ENCODE measurements at regions of chr11 and their contacts with region 1.

Region 1: GRCh38 chr11:14308114-14308896 is 50.7 kb downstream of the RRAS2 start:
- DNase-seq: peak in 2 of 9 experiments; percentile 53 to 67
- ATAC-seq: peak; percentile 84
- H3K4me3 ChIP-seq: no peak overlapping the region
- H3K4me3 Mint-ChIP-seq: no peak overlapping the region
- H3K27ac ChIP-seq: peak overlapping the region in 1 of 2 experiments; percentile 23
- H3K27ac Mint-ChIP-seq: no peak overlapping the region
- H3K4me1 ChIP-seq: peaks cover 6% of the 10 kb centered on the region
- H3K4me1 Mint-ChIP-seq: peaks cover 31% of the 10 kb centered on the region
- H3K27me3 ChIP-seq: no peaks in the 10 kb centered on the region
- H3K27me3 Mint-ChIP-seq: no peaks in the 10 kb centered on the region
- CTCF ChIP-seq: peak; percentile 59

Region 2: GRCh38 chr11:14327116-14327515 is 18.8 kb after region 1 on chr11:
- CTCF ChIA-PET with region 1: interaction called, 4 read pairs
- POLR2A ChIA-PET with region 1: interaction called, 5 read pairs
- intact Hi-C with region 1: loop called in 1 of 2 experiments (anchors 2 kb)
- DNase-seq: no peak
- ATAC-seq: no peak
- H3K4me3 ChIP-seq: no peak overlapping the region
- H3K4me3 Mint-ChIP-seq: no peak overlapping the region
- H3K27ac ChIP-seq: peak overlapping the region in 1 of 2 experiments; percentile 56
- H3K27ac Mint-ChIP-seq: no peak overlapping the region
- H3K4me1 ChIP-seq: peaks cover 12% of the 10 kb centered on the region
- H3K4me1 Mint-ChIP-seq: peaks cover 58% of the 10 kb centered on the region
- H3K27me3 ChIP-seq: no peaks in the 10 kb centered on the region
- H3K27me3 Mint-ChIP-seq: no peaks in the 10 kb centered on the region
- CTCF ChIP-seq: no peak

Region 3: DNA sequence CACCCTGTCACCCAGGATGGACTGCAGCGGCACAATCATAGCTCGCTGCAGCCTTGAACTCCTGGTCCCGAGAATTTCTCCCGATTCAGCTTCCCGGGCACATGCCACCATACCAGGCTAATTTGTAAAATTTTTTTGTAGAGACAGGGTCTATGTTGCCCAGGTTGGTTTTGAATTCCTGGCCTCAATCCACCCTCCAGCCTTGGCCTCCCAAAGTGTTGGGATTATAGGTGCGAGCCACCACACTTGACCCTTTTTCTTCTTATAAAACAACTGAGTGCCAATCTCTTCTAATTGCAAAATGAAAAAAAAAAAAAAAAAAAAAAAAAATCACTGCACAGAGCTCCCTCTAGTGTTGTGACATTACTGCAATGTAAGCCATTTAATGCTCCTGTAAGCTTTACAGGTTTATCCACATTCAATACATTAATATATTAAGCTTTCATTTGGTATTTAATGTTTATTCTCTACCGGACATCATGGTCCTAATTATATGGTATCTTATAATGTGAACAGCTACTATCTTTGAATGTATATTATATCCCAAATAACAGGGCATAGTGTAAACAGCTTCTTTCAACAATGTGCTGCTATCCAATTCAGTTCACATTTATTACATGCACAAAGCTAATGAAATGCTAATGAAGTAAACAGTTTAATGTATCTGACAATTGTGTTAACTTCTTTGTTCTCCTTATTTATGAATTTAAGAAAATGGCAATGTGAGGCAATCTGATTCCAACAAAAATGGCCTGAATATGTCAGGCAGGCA is 146.7 kb after region 1 on chr11:
- CTCF ChIA-PET with region 1: interaction called, 127 read pairs
- POLR2A ChIA-PET with region 1: interaction called, 3 read pairs
- intact Hi-C with region 1: no loop called
- DNase-seq: peak in 2 of 9 experiments; percentile 50 to 61
- ATAC-seq: peak; percentile 52
- H3K4me3 ChIP-seq: no peak overlapping the region
- H3K4me3 Mint-ChIP-seq: no peak overlapping the region
- H3K27ac ChIP-seq: no peak overlapping the region
- H3K27ac Mint-ChIP-seq: no peak overlapping the region
- H3K4me1 ChIP-seq: no peaks in the 10 kb centered on the region
- H3K4me1 Mint-ChIP-seq: no peaks in the 10 kb centered on the region
- H3K27me3 ChIP-seq: no peaks in the 10 kb centered on the region
- H3K27me3 Mint-ChIP-seq: no peaks in the 10 kb centered on the region
- CTCF ChIP-seq: peak; percentile 75

Measured in CD8-positive, alpha-beta T cell (primary cell).